Caco-2 (cell line): ENCODE measurements at regions of chr16 and their contacts with region 1.

Region 1: GRCh38 chr16:50210266-50211038 is 55.9 kb upstream of the ADCY7 start:
- DNase-seq: peak; percentile 75 to 80
- H3K4me3 ChIP-seq: no peak overlapping the region
- H3K4me3 Mint-ChIP-seq: no peak overlapping the region
- H3K27ac Mint-ChIP-seq: peak overlapping the region; percentile 69
- H3K4me1 ChIP-seq: peaks cover 29% of the 10 kb centered on the region
- H3K4me1 Mint-ChIP-seq: peaks cover 24% of the 10 kb centered on the region
- H3K27me3 ChIP-seq: no peaks in the 10 kb centered on the region
- H3K27me3 Mint-ChIP-seq: no peaks in the 10 kb centered on the region
- CTCF ChIP-seq: peak; percentile 76 to 91

Region 2: GRCh38 chr16:50024684-50025536 is 185.5 kb before region 1 on chr16 and contains the start of gene CNEP1R1:
- CTCF ChIA-PET with region 1: interaction called, 125 read pairs
- POLR2A ChIA-PET with region 1: interaction called, 6 read pairs
- intact Hi-C with region 1: loop called (anchors 1 kb)
- DNase-seq: peak; percentile 97 to 98
- H3K4me3 ChIP-seq: peak within 1 kb of the TSS; percentile 82
- H3K4me3 Mint-ChIP-seq: peak within 1 kb of the TSS; percentile 97
- H3K27ac Mint-ChIP-seq: peak within 1 kb of the TSS; percentile 75
- H3K4me1 ChIP-seq: peaks cover 12% of the 10 kb centered on the region
- H3K4me1 Mint-ChIP-seq: peaks cover 12% of the 10 kb centered on the region
- H3K27me3 ChIP-seq: no peaks in the 10 kb centered on the region
- H3K27me3 Mint-ChIP-seq: peaks cover 2% of the 10 kb centered on the region
- CTCF ChIP-seq: peak; percentile 98 to 100
- total RNA-seq, gene CNEP1R1: 34.5 and 39.4 TPM in 2 replicates

Region 3: DNA sequence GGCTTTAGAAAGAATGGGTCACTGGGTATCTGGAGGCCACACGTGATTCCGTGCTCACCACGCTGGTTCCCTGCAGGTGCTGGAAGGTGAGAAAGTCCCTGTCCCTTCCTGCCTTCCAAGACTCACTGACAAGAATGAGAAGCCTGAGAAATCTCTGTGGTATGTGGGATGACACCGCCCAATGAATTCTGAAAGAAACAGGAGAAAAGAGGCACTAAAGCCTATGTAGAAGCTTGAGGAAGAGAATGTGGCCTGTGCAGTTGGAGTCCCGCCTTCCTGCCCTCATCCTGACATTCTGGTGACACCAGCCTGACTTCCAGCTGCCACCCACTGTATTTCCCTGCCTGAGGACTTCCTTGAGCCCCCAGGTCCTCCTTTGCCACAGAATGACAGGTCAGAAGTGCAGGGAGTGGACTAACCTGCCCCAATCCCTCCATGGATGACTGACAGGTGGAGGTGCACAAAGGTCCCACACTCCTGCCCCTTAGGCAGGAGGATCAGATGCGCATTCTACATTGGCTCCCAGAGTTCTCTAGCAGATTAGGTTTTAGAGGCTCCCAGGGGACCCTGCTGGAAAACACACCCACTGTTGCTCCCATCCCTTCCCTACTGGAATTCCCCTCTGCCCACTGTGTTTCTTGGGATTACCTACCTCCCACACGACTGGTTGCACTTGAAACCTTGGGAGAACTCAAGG is 95.9 kb before region 1 on chr16:
- CTCF ChIA-PET with region 1: no interaction called
- POLR2A ChIA-PET with region 1: no interaction called
- intact Hi-C with region 1: loop called (anchors 5 kb)
- DNase-seq: peak; percentile 53 to 69
- H3K4me3 ChIP-seq: no peak overlapping the region
- H3K4me3 Mint-ChIP-seq: no peak overlapping the region
- H3K27ac Mint-ChIP-seq: peak overlapping the region; percentile 15
- H3K4me1 ChIP-seq: peaks cover 12% of the 10 kb centered on the region
- H3K4me1 Mint-ChIP-seq: no peaks in the 10 kb centered on the region
- H3K27me3 ChIP-seq: no peaks in the 10 kb centered on the region
- H3K27me3 Mint-ChIP-seq: no peaks in the 10 kb centered on the region
- CTCF ChIP-seq: no peak

Region 4: GRCh38 chr16:50152807-50153452 is 57.5 kb before region 1 on chr16 and contains the start of gene TENT4B:
- CTCF ChIA-PET with region 1: interaction called, 19 read pairs
- POLR2A ChIA-PET with region 1: no interaction called
- intact Hi-C with region 1: loop called (anchors 2 kb)
- DNase-seq: peak; percentile 90 to 92
- H3K4me3 ChIP-seq: peak within 1 kb of the TSS; percentile 97
- H3K4me3 Mint-ChIP-seq: peak within 1 kb of the TSS; percentile 78
- H3K27ac Mint-ChIP-seq: peak within 1 kb of the TSS; percentile 87
- H3K4me1 ChIP-seq: peaks cover 16% of the 10 kb centered on the region
- H3K4me1 Mint-ChIP-seq: peaks cover 15% of the 10 kb centered on the region
- H3K27me3 ChIP-seq: no peaks in the 10 kb centered on the region
- H3K27me3 Mint-ChIP-seq: no peaks in the 10 kb centered on the region
- CTCF ChIP-seq: no peak
- total RNA-seq, gene TENT4B: 28.6 and 29.3 TPM in 2 replicates

Region 5: DNA sequence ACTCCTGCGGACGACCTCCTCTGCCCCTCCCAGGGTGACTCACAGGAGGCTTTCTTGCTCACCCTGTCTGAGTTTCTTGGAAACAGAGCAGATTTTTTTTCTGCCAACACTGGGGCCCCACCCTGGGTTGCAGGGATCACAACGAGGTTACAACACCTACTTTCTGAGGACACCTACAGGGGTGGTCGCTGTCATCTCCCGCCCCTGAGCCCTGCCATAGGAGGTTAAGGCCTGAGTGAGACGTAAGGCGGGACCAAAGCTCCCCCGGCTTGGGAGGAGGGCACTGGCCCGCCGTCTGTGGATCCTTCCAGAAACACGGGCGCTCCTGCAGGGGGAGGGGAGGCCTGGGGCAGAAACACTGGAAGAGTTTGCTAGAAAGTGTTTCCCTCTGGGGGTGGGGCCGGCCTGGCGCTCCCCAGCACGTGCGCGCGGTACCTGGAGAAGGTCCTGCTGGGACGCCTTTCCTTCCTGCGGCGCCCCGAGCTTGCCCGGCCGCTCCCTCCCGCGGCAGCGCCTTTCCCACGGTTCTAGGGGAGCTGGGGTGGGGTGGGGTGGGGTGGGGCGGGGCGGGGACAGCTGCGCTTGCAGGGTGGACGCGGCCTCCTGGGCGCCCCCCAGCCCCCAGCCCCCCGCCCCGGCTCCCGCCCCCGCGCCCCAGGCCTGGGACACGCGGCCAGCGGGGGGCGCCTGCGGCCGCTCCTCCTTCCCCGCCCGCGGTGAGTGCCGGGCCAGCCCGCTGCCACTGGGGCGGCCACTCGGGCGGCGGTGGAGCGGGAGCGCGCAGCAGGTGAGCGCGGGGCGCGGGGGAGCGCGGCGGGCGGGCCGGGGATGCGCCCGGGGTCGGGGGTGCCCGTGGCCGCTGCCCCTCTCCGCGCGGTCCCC is 35.2 kb after region 1 on chr16:
- CTCF ChIA-PET with region 1: interaction called, 5 read pairs
- POLR2A ChIA-PET with region 1: no interaction called
- intact Hi-C with region 1: loop called (anchors 1 kb)
- DNase-seq: peak; percentile 90
- H3K4me3 ChIP-seq: peak overlapping the region; percentile 47
- H3K4me3 Mint-ChIP-seq: peak overlapping the region; percentile 76
- H3K27ac Mint-ChIP-seq: peak overlapping the region; percentile 89
- H3K4me1 ChIP-seq: peaks cover 14% of the 10 kb centered on the region
- H3K4me1 Mint-ChIP-seq: peaks cover 13% of the 10 kb centered on the region
- H3K27me3 ChIP-seq: no peaks in the 10 kb centered on the region
- H3K27me3 Mint-ChIP-seq: no peaks in the 10 kb centered on the region
- CTCF ChIP-seq: peak in 1 of 2 experiments; percentile 38

Region 6: DNA sequence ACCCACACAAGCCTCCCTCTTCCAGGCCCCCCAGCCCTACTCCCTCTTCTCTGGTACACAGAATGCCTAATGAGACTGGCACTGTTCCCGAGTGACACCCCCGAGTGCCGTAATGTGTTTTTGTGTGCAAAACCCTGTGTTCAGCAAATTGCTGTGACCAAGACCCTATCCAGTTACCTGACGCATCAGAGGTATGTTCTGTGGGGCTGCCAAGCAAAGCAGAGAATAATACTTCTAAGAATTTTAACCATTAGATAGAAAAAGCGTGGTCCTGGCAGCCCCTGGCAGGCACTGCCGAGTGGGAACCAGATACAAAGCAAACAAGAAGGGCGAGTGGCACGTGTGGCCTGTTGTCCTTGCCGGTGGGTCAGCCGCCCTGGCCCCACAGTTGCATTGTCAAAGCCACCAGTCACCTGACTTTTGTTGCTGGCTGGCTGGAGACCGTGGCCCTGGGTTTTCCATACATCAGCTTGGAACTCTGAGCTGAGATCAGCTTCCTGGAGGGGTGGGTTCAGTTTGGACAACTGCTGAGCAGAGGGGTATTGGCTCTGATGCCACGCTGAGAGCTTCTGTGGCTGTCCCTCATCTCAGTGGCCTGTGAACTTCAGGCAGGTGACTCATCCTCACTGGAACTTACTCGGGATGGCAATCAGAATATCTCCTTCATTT is 227.5 kb after region 1 on chr16:
- CTCF ChIA-PET with region 1: no interaction called
- POLR2A ChIA-PET with region 1: no interaction called
- intact Hi-C with region 1: no loop called
- DNase-seq: no peak
- H3K4me3 ChIP-seq: no peak overlapping the region
- H3K4me3 Mint-ChIP-seq: no peak overlapping the region
- H3K27ac Mint-ChIP-seq: no peak overlapping the region
- H3K4me1 ChIP-seq: no peaks in the 10 kb centered on the region
- H3K4me1 Mint-ChIP-seq: peaks cover 4% of the 10 kb centered on the region
- H3K27me3 ChIP-seq: no peaks in the 10 kb centered on the region
- H3K27me3 Mint-ChIP-seq: no peaks in the 10 kb centered on the region
- CTCF ChIP-seq: no peak